Cardiac septum (tissue), 1 donor: ENCODE measurements at regions of chr1 and their contacts with region 1.

Region 1: DNA sequence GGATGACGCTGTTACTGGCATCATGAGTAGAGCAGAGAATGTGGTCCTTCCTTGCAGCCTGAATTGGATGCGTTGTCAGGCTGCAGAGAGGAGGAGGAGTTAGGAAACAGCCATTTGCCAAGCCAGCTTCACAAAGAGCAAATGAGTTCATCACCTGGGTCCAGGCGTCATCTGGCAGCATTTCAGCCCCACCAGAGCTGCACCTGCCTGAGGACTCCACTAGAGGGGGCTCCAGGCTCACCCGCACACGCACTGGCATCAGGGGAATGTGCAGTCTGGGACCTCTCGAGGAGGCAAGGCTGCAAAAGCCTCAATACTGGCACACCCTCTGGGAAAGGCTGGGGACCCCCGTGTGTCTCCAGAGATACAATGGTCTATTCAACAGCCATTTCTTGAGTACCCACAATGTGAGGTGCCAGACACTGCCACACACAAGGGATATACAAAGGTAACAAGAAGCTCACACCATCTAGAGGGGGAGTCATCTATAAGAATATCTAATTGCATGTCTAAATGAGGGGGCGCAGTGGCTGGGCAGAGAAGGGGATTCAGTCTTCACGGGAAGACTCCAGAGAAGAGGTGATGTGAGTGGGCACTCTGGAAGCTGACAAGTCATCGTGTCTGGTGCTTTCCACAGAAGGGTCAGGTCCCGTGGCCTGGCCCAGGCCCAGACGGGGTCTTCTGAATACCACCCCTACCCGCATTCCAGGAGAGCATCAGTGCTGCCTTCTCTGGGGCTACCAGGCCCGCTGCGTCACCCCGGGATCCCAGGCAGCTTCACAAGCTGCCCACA is 53.5 kb upstream of the CNTN2 start:
- DNase-seq: peak; percentile 87

Region 2: DNA sequence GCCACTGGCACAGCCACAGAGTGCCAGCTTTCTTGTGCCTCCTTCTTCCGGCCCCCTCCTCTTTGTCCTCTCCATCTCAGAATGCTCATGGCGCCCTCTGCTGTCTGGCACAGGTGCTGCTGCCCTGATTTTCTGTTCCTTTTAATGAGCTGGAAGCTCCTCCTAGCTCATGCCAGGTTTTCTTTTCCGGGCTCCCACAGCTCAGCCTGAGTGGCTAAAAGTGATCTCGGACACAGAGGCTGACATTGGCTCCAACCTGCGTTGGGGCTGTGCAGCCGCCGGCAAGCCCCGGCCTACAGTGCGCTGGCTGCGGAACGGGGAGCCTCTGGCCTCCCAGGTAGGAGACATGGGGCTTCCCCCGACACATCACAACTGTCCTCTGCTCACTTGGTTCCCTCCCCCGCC is 72.2 kb after region 1 on chr1:
- intact Hi-C with region 1: loop called (anchors 1 kb)
- DNase-seq: peak; percentile 88

Region 3: DNA sequence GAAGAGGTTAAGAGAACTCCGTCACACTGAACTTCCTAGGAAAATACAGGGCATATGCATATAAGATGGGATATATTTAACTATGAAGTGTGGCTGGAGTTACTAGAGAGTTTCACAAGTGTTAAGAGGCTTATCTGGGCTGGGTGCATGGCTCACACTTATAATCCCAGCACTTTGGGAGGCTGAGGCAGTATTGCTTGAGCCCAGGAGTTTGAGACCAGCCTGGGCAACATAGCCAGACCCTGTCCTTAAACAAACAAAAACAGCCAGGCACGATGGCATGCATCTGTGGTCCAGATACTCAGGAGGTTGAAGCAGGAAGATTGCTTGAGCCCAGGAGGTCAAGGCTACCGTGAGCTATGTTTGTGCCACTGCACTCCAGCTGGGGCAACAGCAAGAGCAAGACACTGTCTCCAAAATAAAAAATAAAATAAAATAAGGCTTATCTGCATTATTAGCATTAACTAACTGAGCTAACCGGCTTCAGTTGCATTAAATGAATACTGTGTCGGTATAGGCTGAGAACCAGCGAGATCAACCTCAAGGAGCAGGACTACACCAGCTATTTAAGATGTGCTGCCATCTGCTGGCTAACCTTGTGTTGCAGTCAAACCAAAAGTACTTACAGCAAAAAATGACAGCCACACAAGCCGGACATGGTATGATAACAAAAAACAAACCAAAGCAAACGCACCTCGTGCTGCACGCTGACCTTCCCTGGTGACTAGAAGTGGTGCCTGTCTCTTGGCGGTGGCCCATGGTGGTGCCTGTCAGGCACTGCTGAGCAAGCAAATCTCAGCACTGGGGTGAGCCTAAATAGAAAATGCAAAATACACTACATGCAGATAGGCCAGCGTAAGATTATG is 152.0 kb after region 1 on chr1:
- intact Hi-C with region 1: loop called (anchors 5 kb)
- DNase-seq: no peak